ENCODE measurements at regions of chr11 and their contacts with region 1.

Region 1: GRCh38 chr11:95212609-95213008 is 18.4 kb downstream of the SESN3 start:
- DNase-seq: no peak
- H3K4me3 ChIP-seq: no peak overlapping the region
- H3K27ac ChIP-seq: no peak overlapping the region
- H3K4me1 ChIP-seq: no peaks in the 10 kb centered on the region
- H3K27me3 ChIP-seq: no peaks in the 10 kb centered on the region
- CTCF ChIP-seq: no peak

Region 2: DNA sequence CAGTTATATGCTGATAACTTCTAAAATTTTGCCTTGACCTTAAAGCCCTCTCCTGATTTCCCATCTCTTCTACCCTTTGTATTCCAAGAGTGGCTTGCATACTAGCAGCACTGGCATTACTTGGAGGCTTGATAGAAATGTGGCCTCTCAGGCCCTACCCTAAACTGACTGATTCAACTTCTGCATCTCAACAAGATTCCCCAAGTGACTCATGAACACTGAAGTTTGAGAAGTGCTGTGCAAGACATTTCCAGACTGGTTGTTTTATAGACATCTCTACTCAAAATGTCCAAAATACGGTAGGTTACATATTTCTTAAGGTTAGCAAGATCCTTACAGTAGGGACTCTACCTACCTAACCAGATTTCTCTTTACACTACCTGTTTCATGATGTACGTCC is 30.2 kb before region 1 on chr11:
- CTCF ChIA-PET with region 1: interaction called, 12 read pairs
- POLR2A ChIA-PET with region 1: no interaction called
- intact Hi-C with region 1: no loop called
- DNase-seq: no peak
- H3K4me3 ChIP-seq: no peak overlapping the region
- H3K27ac ChIP-seq: no peak overlapping the region
- H3K4me1 ChIP-seq: no peaks in the 10 kb centered on the region
- H3K27me3 ChIP-seq: no peaks in the 10 kb centered on the region
- CTCF ChIP-seq: no peak

Region 3: GRCh38 chr11:95375886-95376285 is 163.3 kb after region 1 on chr11:
- CTCF ChIA-PET with region 1: no interaction called
- POLR2A ChIA-PET with region 1: no interaction called
- intact Hi-C with region 1: no loop called
- DNase-seq: no peak
- H3K4me3 ChIP-seq: no peak overlapping the region
- H3K27ac ChIP-seq: no peak overlapping the region
- H3K4me1 ChIP-seq: no peaks in the 10 kb centered on the region
- H3K27me3 ChIP-seq: no peaks in the 10 kb centered on the region
- CTCF ChIP-seq: no peak